CD8-positive, alpha-beta T cell (primary cell): ENCODE measurements at regions of chr11 and their contacts with region 1.

Region 1: DNA sequence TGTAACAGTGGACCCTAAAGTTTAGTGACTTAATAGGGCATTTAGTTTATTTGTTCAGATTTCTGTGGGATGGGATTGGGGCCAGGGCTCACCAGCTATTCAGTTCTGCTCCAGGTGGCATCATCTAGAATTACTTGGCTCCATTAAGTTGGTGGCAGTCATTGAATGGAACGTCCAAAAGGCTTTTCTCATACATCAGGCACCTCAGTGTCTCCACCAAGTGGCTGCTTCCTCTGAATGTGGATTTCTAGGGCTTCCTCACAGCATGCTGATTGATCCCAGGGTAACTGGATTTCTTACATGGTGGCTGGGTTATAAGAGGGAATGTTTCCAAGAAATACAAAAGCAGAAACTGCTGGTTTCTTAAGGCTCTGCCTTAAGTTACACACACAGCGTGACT is 34.7 kb downstream of the USP47 start:
- DNase-seq: peak in 2 of 9 experiments; percentile 17 to 40
- ATAC-seq: no peak
- H3K4me3 ChIP-seq: no peak overlapping the region
- H3K4me3 Mint-ChIP-seq: no peak overlapping the region
- H3K27ac ChIP-seq: no peak overlapping the region
- H3K27ac Mint-ChIP-seq: no peak overlapping the region
- H3K4me1 ChIP-seq: peaks cover 22% of the 10 kb centered on the region
- H3K4me1 Mint-ChIP-seq: peaks cover 64% of the 10 kb centered on the region
- H3K27me3 ChIP-seq: no peaks in the 10 kb centered on the region
- H3K27me3 Mint-ChIP-seq: no peaks in the 10 kb centered on the region
- CTCF ChIP-seq: no peak

Region 2: GRCh38 chr11:11856638-11857037 is 19.8 kb before region 1 on chr11:
- CTCF ChIA-PET with region 1: no interaction called
- POLR2A ChIA-PET with region 1: interaction called, 3 read pairs
- intact Hi-C with region 1: loop called in 1 of 2 experiments (anchors 2 kb)
- DNase-seq: peak in 3 of 9 experiments; percentile 33 to 78 (median 56)
- ATAC-seq: peak; percentile 82
- H3K4me3 ChIP-seq: no peak overlapping the region
- H3K4me3 Mint-ChIP-seq: peak overlapping the region; percentile 58
- H3K27ac ChIP-seq: peak overlapping the region in 1 of 2 experiments; percentile 51
- H3K27ac Mint-ChIP-seq: peak overlapping the region; percentile 65
- H3K4me1 ChIP-seq: peaks cover 45% of the 10 kb centered on the region
- H3K4me1 Mint-ChIP-seq: peaks cover 81% of the 10 kb centered on the region
- H3K27me3 ChIP-seq: no peaks in the 10 kb centered on the region
- H3K27me3 Mint-ChIP-seq: no peaks in the 10 kb centered on the region
- CTCF ChIP-seq: no peak

Region 3: DNA sequence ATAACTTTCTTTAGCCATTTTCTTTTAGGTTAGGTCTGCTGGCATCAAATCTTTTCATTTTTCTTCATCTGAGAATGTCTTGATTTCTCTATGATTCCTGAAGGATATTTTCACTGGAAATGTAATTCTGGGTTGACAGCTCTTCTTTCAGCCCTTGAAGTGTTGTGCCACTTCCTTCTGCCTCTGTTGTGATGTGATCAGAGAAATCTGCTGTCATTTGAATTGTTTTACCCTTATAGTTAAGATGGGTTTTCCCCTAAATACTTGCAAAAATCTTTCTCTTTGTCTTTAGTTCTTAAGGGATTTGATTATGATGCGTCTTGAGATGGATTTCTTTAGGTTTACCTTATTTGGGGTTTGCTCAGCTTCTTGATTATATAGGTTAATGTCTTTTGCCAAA is 11.7 kb before region 1 on chr11:
- CTCF ChIA-PET with region 1: interaction called, 4 read pairs
- POLR2A ChIA-PET with region 1: no interaction called
- intact Hi-C with region 1: loop called in 1 of 2 experiments (anchors 2 kb)
- DNase-seq: peak in 2 of 9 experiments; percentile 15 to 56
- ATAC-seq: peak; percentile 85
- H3K4me3 ChIP-seq: no peak overlapping the region
- H3K4me3 Mint-ChIP-seq: peak overlapping the region; percentile 0
- H3K27ac ChIP-seq: no peak overlapping the region
- H3K27ac Mint-ChIP-seq: no peak overlapping the region
- H3K4me1 ChIP-seq: peaks cover 32% of the 10 kb centered on the region
- H3K4me1 Mint-ChIP-seq: peaks cover 79% of the 10 kb centered on the region
- H3K27me3 ChIP-seq: no peaks in the 10 kb centered on the region
- H3K27me3 Mint-ChIP-seq: no peaks in the 10 kb centered on the region
- CTCF ChIP-seq: no peak